AG04450 (cell line): ENCODE measurements at regions of chr1 and their contacts with region 1.

Region 1: DNA sequence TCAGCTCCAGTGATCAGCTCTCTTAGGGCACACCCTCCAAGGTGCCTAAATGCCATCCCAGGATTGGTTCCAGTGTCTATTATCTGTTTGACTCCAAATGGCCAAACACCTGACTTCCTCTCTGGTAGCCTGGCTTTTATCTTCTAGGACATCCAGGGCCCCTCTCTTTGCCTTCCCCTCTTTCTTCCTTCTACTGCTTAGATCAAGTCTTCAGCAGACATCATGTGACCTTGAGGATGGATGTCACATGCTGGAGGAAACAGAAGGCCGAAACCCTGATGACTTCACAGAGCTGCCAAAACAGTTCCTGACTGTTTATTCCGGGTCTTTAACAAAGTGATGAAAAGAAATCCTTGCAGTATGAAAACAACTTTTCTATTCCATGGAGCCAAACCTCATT is 24.4 kb upstream of the WDR26 start:
- DNase-seq: no peak
- H3K4me3 ChIP-seq: no peak overlapping the region
- H3K27ac ChIP-seq: no peak overlapping the region
- H3K27me3 ChIP-seq: no peaks in the 10 kb centered on the region
- CTCF ChIP-seq: no peak

Region 2: DNA sequence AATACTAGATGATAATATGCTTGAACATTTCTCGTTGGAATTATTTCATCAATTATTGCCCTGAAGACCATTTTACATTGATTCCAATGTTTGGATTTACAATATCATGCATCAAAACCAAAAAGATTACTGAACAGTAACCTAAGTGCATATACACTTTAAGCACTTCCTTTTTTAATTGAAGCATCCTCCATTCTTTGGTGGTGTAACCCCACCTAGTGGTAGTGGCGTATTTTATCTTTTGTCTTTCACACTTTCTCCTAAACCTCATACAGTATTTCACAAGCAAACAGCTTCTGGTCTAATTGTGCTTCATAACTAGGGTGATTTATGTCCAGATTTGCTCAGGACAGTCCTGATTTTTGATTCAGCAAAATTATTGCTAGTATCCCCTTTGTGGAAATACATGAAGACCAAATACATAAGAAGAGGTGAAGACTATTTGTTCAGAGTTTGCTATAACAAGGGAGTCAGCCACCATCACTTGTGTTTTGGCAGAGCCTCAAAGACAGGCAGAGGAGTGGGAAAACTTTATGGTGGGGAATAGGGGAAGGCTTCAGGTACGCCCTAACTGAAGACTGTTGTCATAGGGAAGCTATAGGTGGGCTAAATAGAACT is 125.6 kb before region 1 on chr1:
- CTCF ChIA-PET with region 1: interaction called, 12 read pairs
- POLR2A ChIA-PET with region 1: no interaction called
- DNase-seq: no peak
- H3K4me3 ChIP-seq: no peak overlapping the region
- H3K27ac ChIP-seq: no peak overlapping the region
- H3K27me3 ChIP-seq: no peaks in the 10 kb centered on the region
- CTCF ChIP-seq: peak; percentile 72

Region 3: GRCh38 chr1:224383218-224383617 is 75.8 kb before region 1 on chr1:
- CTCF ChIA-PET with region 1: interaction called, 14 read pairs
- POLR2A ChIA-PET with region 1: interaction called, 5 read pairs
- DNase-seq: no peak
- H3K4me3 ChIP-seq: no peak overlapping the region
- H3K27ac ChIP-seq: no peak overlapping the region
- H3K27me3 ChIP-seq: no peaks in the 10 kb centered on the region
- CTCF ChIP-seq: no peak

Region 4: GRCh38 chr1:224425279-224425884 is 33.6 kb before region 1 on chr1:
- CTCF ChIA-PET with region 1: interaction called, 14 read pairs
- POLR2A ChIA-PET with region 1: interaction called, 7 read pairs
- DNase-seq: no peak
- H3K4me3 ChIP-seq: no peak overlapping the region
- H3K27ac ChIP-seq: no peak overlapping the region
- H3K27me3 ChIP-seq: no peaks in the 10 kb centered on the region
- CTCF ChIP-seq: no peak

Region 5: GRCh38 chr1:224447251-224447650 is 11.7 kb before region 1 on chr1:
- CTCF ChIA-PET with region 1: interaction called, 47 read pairs
- POLR2A ChIA-PET with region 1: interaction called, 5 read pairs
- DNase-seq: no peak
- H3K4me3 ChIP-seq: no peak overlapping the region
- H3K27ac ChIP-seq: no peak overlapping the region
- H3K27me3 ChIP-seq: no peaks in the 10 kb centered on the region
- CTCF ChIP-seq: no peak

Region 6: GRCh38 chr1:224528900-224529299 is 69.9 kb after region 1 on chr1:
- CTCF ChIA-PET with region 1: no interaction called
- POLR2A ChIA-PET with region 1: no interaction called
- DNase-seq: peak; percentile 89
- H3K4me3 ChIP-seq: no peak overlapping the region
- H3K27ac ChIP-seq: peak overlapping the region; percentile 71
- H3K27me3 ChIP-seq: no peaks in the 10 kb centered on the region
- CTCF ChIP-seq: no peak

Region 7: DNA sequence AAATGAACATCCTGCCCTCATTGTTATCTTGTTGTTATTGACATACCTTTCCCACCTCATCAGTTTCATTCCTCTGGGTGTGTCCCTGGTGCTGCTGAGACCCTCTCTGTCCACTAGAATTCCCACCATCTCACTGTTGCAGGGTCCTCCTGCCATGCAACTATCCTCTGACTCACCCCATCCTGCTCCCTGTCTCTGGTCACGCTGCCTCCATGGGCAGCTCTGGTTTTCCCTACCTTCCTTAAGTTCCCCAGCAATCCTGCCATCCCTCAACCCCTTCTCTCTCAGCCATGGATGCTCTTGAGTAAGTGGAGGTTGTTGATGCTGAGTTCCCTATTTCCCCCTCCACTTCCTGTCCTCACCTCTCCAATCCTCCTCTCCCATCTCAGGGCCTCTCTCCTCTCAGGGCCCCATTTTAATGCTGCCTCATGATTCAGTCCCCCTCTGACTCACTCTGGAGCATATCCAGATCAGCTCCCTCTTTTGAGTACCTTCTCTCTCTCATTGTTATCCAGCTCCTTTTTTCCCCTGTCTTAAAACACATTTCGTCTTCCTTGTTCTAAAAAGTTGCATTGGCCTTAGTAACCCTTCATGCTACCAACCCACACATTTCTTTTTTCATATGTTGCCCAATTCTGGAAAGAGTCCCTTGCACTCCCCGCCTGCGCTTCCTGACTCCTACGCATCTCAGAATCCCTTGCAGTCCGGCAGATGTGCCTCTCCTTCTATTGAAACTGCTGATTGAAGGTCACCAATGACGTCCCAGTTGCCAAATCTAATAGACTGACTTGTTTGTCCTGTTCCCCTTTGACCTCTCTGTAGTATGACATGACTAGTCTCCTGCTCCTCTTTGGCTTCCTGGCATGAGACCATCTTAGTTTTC is 249.1 kb after region 1 on chr1:
- CTCF ChIA-PET with region 1: no interaction called
- POLR2A ChIA-PET with region 1: no interaction called
- DNase-seq: peak; percentile 34
- H3K4me3 ChIP-seq: no peak overlapping the region
- H3K27ac ChIP-seq: peak overlapping the region; percentile 76
- H3K27me3 ChIP-seq: no peaks in the 10 kb centered on the region
- CTCF ChIP-seq: no peak

Region 8: GRCh38 chr1:224922404-224923164 is 463.6 kb after region 1 on chr1:
- CTCF ChIA-PET with region 1: interaction called, 17 read pairs
- POLR2A ChIA-PET with region 1: no interaction called
- DNase-seq: peak; percentile 1
- H3K4me3 ChIP-seq: no peak overlapping the region
- H3K27ac ChIP-seq: no peak overlapping the region
- H3K27me3 ChIP-seq: no peaks in the 10 kb centered on the region
- CTCF ChIP-seq: peak; percentile 82